Heart right ventricle (tissue), 16 donors: ENCODE measurements at regions of chr10 and their contacts with region 1.

Region 1: GRCh38 chr10:10222304-10222841 is 795.3 kb upstream of the CELF2 start:
- DNase-seq: no peak
- ATAC-seq: no peak
- H3K4me3 ChIP-seq: no peak overlapping the region
- H3K27ac ChIP-seq: no peak overlapping the region
- H3K4me1 ChIP-seq: no peaks in the 10 kb centered on the region
- H3K27me3 ChIP-seq: no peaks in the 10 kb centered on the region
- CTCF ChIP-seq: no peak

Region 2: DNA sequence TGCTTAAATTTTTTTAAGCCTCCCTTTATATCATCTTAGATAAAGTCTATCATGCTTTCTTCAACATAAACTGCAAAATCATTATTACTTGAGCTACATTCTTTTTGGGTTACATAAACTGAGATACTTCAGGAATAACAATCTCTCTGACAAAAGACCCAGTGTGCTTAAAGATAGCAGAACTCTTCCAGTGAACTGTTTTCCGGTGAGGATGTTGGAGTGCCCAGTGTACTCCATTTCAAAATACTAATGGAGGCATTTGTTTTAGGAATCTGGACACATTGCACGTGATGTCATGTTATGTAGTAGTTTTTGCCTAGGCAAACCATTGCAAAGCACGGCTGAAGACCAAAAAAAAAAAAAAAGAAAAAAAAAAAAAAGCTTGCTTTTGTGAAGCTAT is 407.1 kb after region 1 on chr10:
- intact Hi-C with region 1: loop called in 1 of 10 experiments (anchors 5 kb)
- DNase-seq: no peak
- ATAC-seq: peak in 4 of 8 donors; percentile 23 to 33 (median 27)
- H3K4me3 ChIP-seq: no peak overlapping the region
- H3K27ac ChIP-seq: no peak overlapping the region
- H3K4me1 ChIP-seq: peaks cover 0 to 27% (median 7%) of the 10 kb centered on the region in 9 donors
- H3K27me3 ChIP-seq: no peaks in the 10 kb centered on the region
- CTCF ChIP-seq: no peak

Region 3: GRCh38 chr10:10685566-10685965 is 463.2 kb after region 1 on chr10:
- intact Hi-C with region 1: loop called in 1 of 10 experiments (anchors 10 kb)
- DNase-seq: no peak
- ATAC-seq: no peak
- H3K4me3 ChIP-seq: no peak overlapping the region
- H3K27ac ChIP-seq: no peak overlapping the region
- H3K4me1 ChIP-seq: no peaks in the 10 kb centered on the region
- H3K27me3 ChIP-seq: no peaks in the 10 kb centered on the region
- CTCF ChIP-seq: no peak